ENCODE measurements at regions of chr17 and their contacts with region 1.

Region 1: DNA sequence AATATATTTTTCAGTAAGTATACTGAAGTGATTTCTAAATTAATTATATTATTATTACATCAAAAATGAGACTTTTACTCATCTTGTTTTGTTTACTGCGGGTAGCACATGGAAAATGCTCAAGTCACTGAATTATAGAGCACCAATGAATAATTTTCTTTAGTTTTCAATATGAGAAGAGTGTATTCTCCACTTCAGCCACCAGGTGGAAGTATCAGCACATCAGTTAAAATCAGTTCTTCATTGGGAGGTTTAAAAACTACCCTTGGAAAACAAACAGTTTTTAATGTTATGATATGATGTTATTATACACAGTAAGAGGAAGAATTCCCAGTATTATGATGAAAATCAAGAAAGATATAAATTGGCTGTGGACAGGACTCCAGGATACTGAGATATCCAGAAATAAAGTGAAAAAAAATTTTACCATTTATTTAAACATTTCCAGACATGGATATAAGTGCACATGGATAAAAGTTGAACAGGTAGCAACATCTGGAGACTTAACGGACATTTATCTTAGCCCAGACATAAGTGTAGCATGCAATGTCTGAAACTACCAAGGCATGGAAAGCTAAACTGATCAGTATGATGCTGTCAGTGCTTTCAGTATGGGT is 467.3 kb downstream of the KCNJ2 start:
- DNase-seq: no peak
- H3K4me3 ChIP-seq: no peak overlapping the region
- H3K27ac ChIP-seq: no peak overlapping the region
- H3K4me1 ChIP-seq: no peaks in the 10 kb centered on the region
- H3K27me3 ChIP-seq: no peaks in the 10 kb centered on the region
- CTCF ChIP-seq: peak; percentile 65 to 85 (median 78)
- EP300 ChIP-seq: no peak
- POLR2A ChIP-seq: no peak

Region 2: GRCh38 chr17:70767102-70767701 is 130.6 kb after region 1 on chr17:
- intact Hi-C with region 1: loop called (anchors 10 kb)
- DNase-seq: no peak
- H3K4me3 ChIP-seq: no peak overlapping the region
- H3K27ac ChIP-seq: no peak overlapping the region
- H3K4me1 ChIP-seq: peaks cover 0 to 3% (median 0%) of the 10 kb centered on the region in 4 donors
- H3K27me3 ChIP-seq: no peaks in the 10 kb centered on the region
- CTCF ChIP-seq: peak; percentile 34 to 57 (median 48)
- EP300 ChIP-seq: no peak
- POLR2A ChIP-seq: no peak

Region 3: GRCh38 chr17:71099003-71099714 is 462.5 kb after region 1 on chr17:
- intact Hi-C with region 1: no loop called
- DNase-seq: no peak
- H3K4me3 ChIP-seq: no peak overlapping the region
- H3K27ac ChIP-seq: no peak overlapping the region
- H3K4me1 ChIP-seq: peaks cover 0 to 8% (median 4%) of the 10 kb centered on the region in 4 donors
- H3K27me3 ChIP-seq: no peaks in the 10 kb centered on the region
- CTCF ChIP-seq: no peak
- EP300 ChIP-seq: no peak
- POLR2A ChIP-seq: no peak